ENCODE measurements at regions of chr6 and their contacts with region 1.

Region 1: DNA sequence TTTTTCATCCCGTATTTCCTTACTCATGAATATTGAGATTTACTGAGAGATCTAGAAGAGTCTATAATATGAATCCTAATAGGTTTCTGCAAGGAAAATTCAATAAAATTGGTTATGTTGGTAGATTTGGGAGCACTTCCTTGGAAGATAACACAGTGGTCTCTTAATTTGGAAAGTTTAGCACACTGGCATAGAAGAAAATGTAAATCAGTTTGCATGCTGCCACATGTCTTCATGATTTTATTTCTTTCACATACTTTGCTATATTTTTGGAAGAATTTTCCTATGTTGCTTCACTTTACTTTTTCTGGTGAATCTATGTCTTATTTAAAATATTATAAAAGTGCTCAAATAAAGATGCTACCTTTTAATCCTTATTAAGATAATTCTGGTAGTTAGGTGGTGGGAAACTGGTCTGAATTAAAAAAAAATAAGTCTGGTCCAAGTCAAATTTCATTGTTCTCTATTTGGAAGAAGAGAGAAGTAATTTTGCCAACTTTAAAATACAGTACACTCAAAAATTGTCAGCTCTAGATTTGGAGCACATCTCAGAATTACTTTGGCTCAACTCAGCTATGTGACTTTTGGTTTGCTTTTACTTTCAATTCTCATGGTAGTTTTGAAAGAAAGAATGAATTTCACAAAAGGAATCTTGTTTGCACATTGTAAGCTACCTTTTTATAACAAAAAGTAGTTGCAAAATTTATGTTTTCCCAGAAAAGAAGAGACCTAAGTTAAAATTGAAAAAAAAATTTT is 197.3 kb downstream of the CENPW start:
- DNase-seq: no peak
- ATAC-seq: no peak
- H3K4me3 ChIP-seq: no peak overlapping the region
- H3K27ac ChIP-seq: no peak overlapping the region
- H3K4me1 ChIP-seq: no peaks in the 10 kb centered on the region
- H3K27me3 ChIP-seq: no peaks in the 10 kb centered on the region
- CTCF ChIP-seq: no peak
- EP300 ChIP-seq: no peak
- POLR2A ChIP-seq: no peak
- RAD21 ChIP-seq: no peak

Region 2: GRCh38 chr6:126574301-126574700 is 37.1 kb after region 1 on chr6:
- CTCF ChIA-PET with region 1: no interaction called
- POLR2A ChIA-PET with region 1: no interaction called
- RAD21 ChIA-PET with region 1: no interaction called
- SMC1A ChIA-PET with region 1: no interaction called
- in situ Hi-C with region 1: no loop called
- intact Hi-C with region 1: loop called (anchors 2 kb)
- DNase-seq: no peak
- ATAC-seq: no peak
- H3K4me3 ChIP-seq: no peak overlapping the region
- H3K27ac ChIP-seq: no peak overlapping the region
- H3K4me1 ChIP-seq: no peaks in the 10 kb centered on the region
- H3K27me3 ChIP-seq: no peaks in the 10 kb centered on the region
- CTCF ChIP-seq: no peak
- EP300 ChIP-seq: no peak
- POLR2A ChIP-seq: no peak
- RAD21 ChIP-seq: no peak

Measured in GM12878 (cell line).